ENCODE measurements at regions of chr3 and their contacts with region 1.

Region 1: GRCh38 chr3:9352917-9353752 is 9.7 kb upstream of the THUMPD3 start:
- DNase-seq: peak; percentile 67
- H3K4me3 Mint-ChIP-seq: no peak overlapping the region
- H3K27ac Mint-ChIP-seq: no peak overlapping the region
- H3K4me1 Mint-ChIP-seq: peaks cover 24% of the 10 kb centered on the region
- H3K27me3 Mint-ChIP-seq: no peaks in the 10 kb centered on the region
- CTCF ChIP-seq: peak; percentile 90

Region 2: DNA sequence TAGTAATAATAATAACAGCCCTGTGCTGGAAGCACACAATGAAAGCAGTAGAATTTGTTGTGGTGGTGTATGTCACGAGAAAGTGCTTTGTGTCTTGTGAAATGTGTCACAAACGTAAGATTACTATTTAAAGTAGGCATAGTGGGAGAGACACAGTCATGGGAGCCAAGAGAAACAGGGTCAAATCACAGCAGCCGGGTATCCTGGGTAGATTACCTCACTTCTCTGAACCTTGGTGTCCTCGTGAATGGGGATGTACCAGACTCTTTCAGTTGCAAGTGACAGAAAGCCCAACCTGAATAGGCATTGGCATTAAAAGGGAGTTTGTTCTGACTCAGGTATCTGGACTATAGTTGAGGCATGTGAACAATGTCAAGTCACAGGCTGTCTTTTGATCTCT is 74.6 kb before region 1 on chr3:
- CTCF ChIA-PET with region 1: no interaction called
- POLR2A ChIA-PET with region 1: no interaction called
- intact Hi-C with region 1: no loop called
- DNase-seq: no peak
- H3K4me3 Mint-ChIP-seq: no peak overlapping the region
- H3K27ac Mint-ChIP-seq: no peak overlapping the region
- H3K4me1 Mint-ChIP-seq: no peaks in the 10 kb centered on the region
- H3K27me3 Mint-ChIP-seq: no peaks in the 10 kb centered on the region
- CTCF ChIP-seq: no peak

Region 3: GRCh38 chr3:9340472-9340902 is 12.6 kb before region 1 on chr3:
- CTCF ChIA-PET with region 1: interaction called, 16 read pairs
- POLR2A ChIA-PET with region 1: interaction called, 3 read pairs
- intact Hi-C with region 1: no loop called
- DNase-seq: peak; percentile 69
- H3K4me3 Mint-ChIP-seq: no peak overlapping the region
- H3K27ac Mint-ChIP-seq: peak overlapping the region; percentile 46
- H3K4me1 Mint-ChIP-seq: peaks cover 13% of the 10 kb centered on the region
- H3K27me3 Mint-ChIP-seq: no peaks in the 10 kb centered on the region
- CTCF ChIP-seq: no peak

Measured in MCF 10A (cell line).